ENCODE measurements at regions of chr1 and their contacts with region 1.

Region 1: DNA sequence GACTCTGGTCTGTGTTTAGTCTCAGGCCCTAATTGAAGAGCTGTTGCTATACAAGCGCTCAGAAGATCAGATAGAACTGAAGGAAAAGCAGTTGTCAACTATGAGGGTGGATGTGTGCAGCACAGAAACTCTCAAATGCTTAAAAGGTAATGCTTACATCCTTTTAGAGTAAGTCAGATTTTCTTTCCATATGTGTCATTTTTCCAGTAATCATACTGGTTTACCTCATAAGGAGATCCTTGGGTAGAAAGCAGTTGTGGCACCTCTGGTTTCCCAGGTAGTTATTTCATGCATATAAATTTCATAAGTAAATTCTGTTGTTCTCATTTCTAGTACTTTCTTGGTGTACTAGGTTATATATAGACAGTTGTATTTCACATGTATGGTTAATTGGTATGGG is 43.0 kb upstream of the TARS2 start:
- DNase-seq: no peak
- ATAC-seq: no peak
- H3K4me3 ChIP-seq: no peak overlapping the region
- H3K27ac ChIP-seq: no peak overlapping the region
- H3K4me1 ChIP-seq: no peaks in the 10 kb centered on the region
- H3K27me3 ChIP-seq: no peaks in the 10 kb centered on the region
- CTCF ChIP-seq: no peak

Region 2: DNA sequence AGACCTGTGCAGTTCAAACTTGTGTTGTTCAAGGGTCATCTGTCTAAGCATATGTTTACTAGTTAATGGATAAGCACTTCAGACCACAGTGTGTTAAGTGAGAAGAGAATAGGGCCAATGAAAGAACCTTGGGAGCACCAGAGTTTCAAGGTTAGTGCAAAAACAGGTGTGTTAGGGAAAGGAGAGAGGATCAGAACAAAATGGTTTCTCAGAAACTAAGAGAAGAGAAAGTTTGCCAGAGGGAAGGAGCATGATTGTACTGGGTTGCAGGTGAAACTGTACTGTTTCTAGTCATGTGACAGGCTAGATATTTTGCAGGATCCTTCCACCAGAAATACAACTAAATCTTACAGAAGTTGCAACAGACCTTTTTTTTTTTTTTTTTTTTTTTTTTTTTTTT is 57.0 kb before region 1 on chr1:
- intact Hi-C with region 1: loop called in 1 of 10 experiments (anchors 10 kb)
- DNase-seq: no peak
- ATAC-seq: no peak
- H3K4me3 ChIP-seq: no peak overlapping the region
- H3K27ac ChIP-seq: no peak overlapping the region
- H3K4me1 ChIP-seq: peaks cover 0 to 64% (median 29%) of the 10 kb centered on the region in 9 donors
- H3K27me3 ChIP-seq: no peaks in the 10 kb centered on the region
- CTCF ChIP-seq: no peak